Sigmoid colon (tissue), 7 donors: ENCODE measurements at regions of chr16 and their contacts with region 1.

Region 1: DNA sequence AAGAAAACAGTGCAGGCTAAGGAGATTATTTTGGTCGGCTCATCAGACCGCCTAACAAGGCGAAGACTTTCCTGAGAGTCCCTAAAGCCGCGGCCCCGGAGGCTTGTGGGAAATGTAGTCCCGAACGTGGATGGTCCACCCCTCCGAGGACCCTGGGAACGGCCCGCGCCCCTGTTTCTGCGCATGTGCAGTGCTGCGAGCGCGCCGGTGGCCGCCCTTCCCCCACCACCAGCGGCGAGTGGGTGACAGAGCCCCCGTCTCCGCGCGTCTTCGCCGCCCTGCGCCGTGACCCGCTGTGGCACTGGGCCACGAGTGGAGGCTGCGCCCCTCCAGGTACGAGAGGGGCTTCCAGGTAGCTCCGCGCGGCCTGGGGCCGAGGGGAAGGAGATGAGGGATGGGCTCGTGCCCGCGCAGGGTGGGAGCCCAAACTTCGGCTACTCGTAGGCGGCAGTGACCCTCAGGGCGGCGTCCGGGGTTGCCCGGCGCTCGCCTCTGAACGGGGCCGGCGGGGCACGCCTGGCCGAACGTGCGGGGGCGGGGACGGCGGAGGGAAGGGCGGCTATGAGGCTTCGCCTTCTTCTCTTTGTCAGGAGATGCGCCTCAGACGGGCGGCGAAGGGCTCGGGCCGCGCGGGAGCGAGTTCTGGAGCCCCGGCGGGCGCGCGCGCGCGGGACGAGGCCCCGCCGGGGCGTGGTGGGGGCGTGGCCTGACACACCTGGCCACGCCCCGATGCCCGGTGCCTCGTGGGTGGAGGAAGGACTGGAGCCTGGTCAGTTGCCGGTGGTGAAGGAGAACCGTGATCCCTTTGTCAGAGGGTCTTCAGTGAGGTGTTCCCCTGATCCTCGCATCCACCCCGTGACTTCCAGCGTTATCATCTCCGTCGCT is at the start of gene ZFP1:
- DNase-seq: peak; percentile 98
- H3K4me3 ChIP-seq: peak within 1 kb of the TSS; percentile 90 to 100 (median 99)
- H3K27ac ChIP-seq: peak within 1 kb of the TSS; percentile 98 to 100 (median 100)
- H3K4me1 ChIP-seq: peaks cover 0 to 11% (median 8%) of the 10 kb centered on the region in 4 donors
- H3K27me3 ChIP-seq: no peaks in the 10 kb centered on the region
- CTCF ChIP-seq: no peak
- EP300 ChIP-seq: peak in 1 of 4 donors; percentile 68
- POLR2A ChIP-seq: peak; percentile 40 to 53
- total RNA-seq, gene ZFP1: 9.2 to 17.5 (median 15.4) TPM

Region 2: GRCh38 chr16:74813109-74813641 is 335.4 kb before region 1 on chr16:
- intact Hi-C with region 1: loop called (anchors 10 kb)
- DNase-seq: peak; percentile 78
- H3K4me3 ChIP-seq: no peak overlapping the region
- H3K27ac ChIP-seq: no peak overlapping the region
- H3K4me1 ChIP-seq: peaks cover 0 to 4% (median 3%) of the 10 kb centered on the region in 4 donors
- H3K27me3 ChIP-seq: no peaks in the 10 kb centered on the region
- CTCF ChIP-seq: peak; percentile 66 to 96 (median 91)
- EP300 ChIP-seq: no peak
- POLR2A ChIP-seq: no peak

Region 3: DNA sequence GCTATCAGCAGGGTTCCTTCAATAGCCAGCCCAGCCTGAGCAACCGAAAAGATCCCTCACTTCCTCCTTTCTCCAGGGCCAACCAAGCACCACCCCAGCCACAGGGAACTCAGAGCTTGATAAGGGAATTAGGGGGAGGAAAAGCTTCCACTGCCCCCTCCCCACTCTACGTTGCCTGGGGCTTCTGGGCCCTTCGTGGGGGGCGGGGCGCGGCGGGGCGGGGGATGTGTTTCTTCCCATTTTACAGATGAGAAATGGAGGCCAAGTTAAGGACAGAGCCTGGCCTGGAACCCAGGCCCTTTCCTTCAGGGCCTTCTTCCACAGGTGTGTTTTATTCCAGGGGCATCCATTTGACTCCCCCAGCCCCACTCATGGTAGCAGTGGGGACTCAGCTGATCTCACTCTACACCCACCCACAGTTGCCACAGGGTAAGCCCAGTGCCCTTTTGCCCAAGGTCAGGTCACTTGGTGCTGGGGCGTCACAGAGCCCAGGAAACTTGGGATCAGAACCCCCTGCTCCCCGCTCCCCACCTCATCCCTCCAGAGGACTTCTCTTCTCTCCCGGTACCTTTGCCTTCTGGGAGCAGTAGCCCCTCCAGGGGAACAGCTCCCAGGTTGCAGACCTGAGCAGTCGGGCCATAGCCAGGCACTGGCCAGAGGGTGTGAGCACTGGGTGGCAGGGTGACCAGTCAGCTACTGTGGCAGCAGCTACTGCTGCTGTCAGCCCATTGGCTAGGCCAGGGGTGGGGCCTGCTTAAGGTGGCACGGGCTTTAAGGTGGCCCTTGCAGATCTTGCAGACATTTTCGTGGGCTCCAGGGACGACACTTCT is 32.3 kb before region 1 on chr16 and contains the start of gene LDHD:
- intact Hi-C with region 1: loop called (anchors 2 kb)
- DNase-seq: peak; percentile 93
- H3K4me3 ChIP-seq: peak within 1 kb of the TSS; percentile 39 to 59 (median 46)
- H3K27ac ChIP-seq: peak within 1 kb of the TSS in 3 of 4 donors; percentile 33 to 58 (median 54)
- H3K4me1 ChIP-seq: peaks cover 0 to 36% (median 15%) of the 10 kb centered on the region in 4 donors
- H3K27me3 ChIP-seq: no peaks in the 10 kb centered on the region
- CTCF ChIP-seq: no peak
- EP300 ChIP-seq: no peak
- POLR2A ChIP-seq: peak; percentile 52 to 87
- total RNA-seq, gene LDHD: 2.5 to 7.6 (median 7.3) TPM